Caco-2 (cell line): ENCODE measurements at regions of chr15 and their contacts with region 1.

Region 1: GRCh38 chr15:99213187-99213811 is 36.1 kb downstream of the TTC23 start:
- DNase-seq: peak; percentile 66 to 74
- H3K4me3 ChIP-seq: no peak overlapping the region
- H3K4me3 Mint-ChIP-seq: no peak overlapping the region
- H3K27ac Mint-ChIP-seq: no peak overlapping the region
- H3K4me1 ChIP-seq: no peaks in the 10 kb centered on the region
- H3K4me1 Mint-ChIP-seq: peaks cover 7% of the 10 kb centered on the region
- H3K27me3 ChIP-seq: no peaks in the 10 kb centered on the region
- H3K27me3 Mint-ChIP-seq: no peaks in the 10 kb centered on the region
- CTCF ChIP-seq: peak; percentile 77 to 79

Region 2: GRCh38 chr15:98442379-98442833 is 770.9 kb before region 1 on chr15:
- CTCF ChIA-PET with region 1: no interaction called
- POLR2A ChIA-PET with region 1: no interaction called
- intact Hi-C with region 1: loop called (anchors 10 kb)
- DNase-seq: peak; percentile 69 to 70
- H3K4me3 ChIP-seq: no peak overlapping the region
- H3K4me3 Mint-ChIP-seq: no peak overlapping the region
- H3K27ac Mint-ChIP-seq: no peak overlapping the region
- H3K4me1 ChIP-seq: no peaks in the 10 kb centered on the region
- H3K4me1 Mint-ChIP-seq: no peaks in the 10 kb centered on the region
- H3K27me3 ChIP-seq: no peaks in the 10 kb centered on the region; the same call in 1 of the 2 replicates
- H3K27me3 Mint-ChIP-seq: peaks cover 19% of the 10 kb centered on the region
- CTCF ChIP-seq: peak; percentile 74 to 78

Region 3: GRCh38 chr15:99155961-99156450 is 57.3 kb before region 1 on chr15:
- CTCF ChIA-PET with region 1: no interaction called
- POLR2A ChIA-PET with region 1: no interaction called
- intact Hi-C with region 1: loop called (anchors 2 kb)
- DNase-seq: peak; percentile 44 to 51
- H3K4me3 ChIP-seq: no peak overlapping the region
- H3K4me3 Mint-ChIP-seq: peak overlapping the region; percentile 32
- H3K27ac Mint-ChIP-seq: no peak overlapping the region
- H3K4me1 ChIP-seq: peaks cover 39% of the 10 kb centered on the region
- H3K4me1 Mint-ChIP-seq: peaks cover 22% of the 10 kb centered on the region
- H3K27me3 ChIP-seq: no peaks in the 10 kb centered on the region
- H3K27me3 Mint-ChIP-seq: no peaks in the 10 kb centered on the region
- CTCF ChIP-seq: no peak

Region 4: GRCh38 chr15:99250494-99251435 is 37.5 kb after region 1 on chr15:
- CTCF ChIA-PET with region 1: no interaction called
- POLR2A ChIA-PET with region 1: no interaction called
- intact Hi-C with region 1: no loop called
- DNase-seq: peak; percentile 97 to 98
- H3K4me3 ChIP-seq: peak overlapping the region; percentile 84
- H3K4me3 Mint-ChIP-seq: no peak overlapping the region
- H3K27ac Mint-ChIP-seq: peak overlapping the region; percentile 92
- H3K4me1 ChIP-seq: no peaks in the 10 kb centered on the region; the same call in 1 of the 2 replicates
- H3K4me1 Mint-ChIP-seq: no peaks in the 10 kb centered on the region
- H3K27me3 ChIP-seq: no peaks in the 10 kb centered on the region
- H3K27me3 Mint-ChIP-seq: no peaks in the 10 kb centered on the region
- CTCF ChIP-seq: no peak